Spleen (tissue), 13 donors: ENCODE measurements at regions of chr19 and their contacts with region 1.

Region 1: GRCh38 chr19:3471954-3472655 is 8.2 kb downstream of the SMIM24 start:
- DNase-seq: no peak
- H3K4me3 ChIP-seq: no peak overlapping the region
- H3K27ac ChIP-seq: no peak overlapping the region
- H3K4me1 ChIP-seq: peaks cover 0 to 42% (median 11%) of the 10 kb centered on the region in 6 donors
- H3K27me3 ChIP-seq: peaks cover 0 to 26% (median 0%) of the 10 kb centered on the region in 7 donors
- CTCF ChIP-seq: peak in 10 of 11 experiments; percentile 42 to 79 (median 68)
- POLR2A ChIP-seq: no peak

Region 2: DNA sequence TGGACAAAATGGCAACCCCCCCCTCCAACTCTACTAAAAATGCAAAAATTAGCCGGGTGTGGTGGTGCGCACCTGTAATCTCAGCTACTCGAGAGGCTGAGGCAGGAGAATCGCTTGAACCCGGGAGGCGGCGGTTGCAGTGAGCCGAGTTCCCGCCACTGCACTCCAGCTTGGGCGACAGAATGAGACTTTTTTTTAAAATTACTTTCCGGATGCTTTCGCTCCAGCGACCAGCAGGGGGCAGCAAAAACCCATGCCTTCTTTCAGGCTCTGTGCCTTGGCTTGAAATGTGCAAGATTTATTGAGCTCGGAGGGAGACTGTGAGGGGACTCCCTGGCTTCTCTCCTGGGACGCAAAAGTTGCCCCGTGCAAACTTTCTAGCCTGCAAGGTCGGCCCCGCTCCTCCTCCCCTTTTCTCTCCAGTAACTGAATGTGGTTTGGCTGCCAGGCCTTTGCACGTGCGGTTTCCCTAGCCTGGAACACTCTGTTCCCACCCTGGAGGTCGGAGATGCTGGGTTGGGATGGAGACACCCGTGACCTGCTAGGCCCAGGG is 167.2 kb before region 1 on chr19:
- intact Hi-C with region 1: loop called (anchors 5 kb)
- DNase-seq: peak; percentile 86
- H3K4me3 ChIP-seq: peak overlapping the region in 1 of 8 donors; percentile 11
- H3K27ac ChIP-seq: no peak overlapping the region
- H3K4me1 ChIP-seq: peaks cover 0 to 9% (median 3%) of the 10 kb centered on the region in 6 donors
- H3K27me3 ChIP-seq: peaks cover 0 to 87% (median 20%) of the 10 kb centered on the region in 7 donors
- CTCF ChIP-seq: peak; percentile 48 to 85 (median 73)
- POLR2A ChIP-seq: no peak

Region 3: DNA sequence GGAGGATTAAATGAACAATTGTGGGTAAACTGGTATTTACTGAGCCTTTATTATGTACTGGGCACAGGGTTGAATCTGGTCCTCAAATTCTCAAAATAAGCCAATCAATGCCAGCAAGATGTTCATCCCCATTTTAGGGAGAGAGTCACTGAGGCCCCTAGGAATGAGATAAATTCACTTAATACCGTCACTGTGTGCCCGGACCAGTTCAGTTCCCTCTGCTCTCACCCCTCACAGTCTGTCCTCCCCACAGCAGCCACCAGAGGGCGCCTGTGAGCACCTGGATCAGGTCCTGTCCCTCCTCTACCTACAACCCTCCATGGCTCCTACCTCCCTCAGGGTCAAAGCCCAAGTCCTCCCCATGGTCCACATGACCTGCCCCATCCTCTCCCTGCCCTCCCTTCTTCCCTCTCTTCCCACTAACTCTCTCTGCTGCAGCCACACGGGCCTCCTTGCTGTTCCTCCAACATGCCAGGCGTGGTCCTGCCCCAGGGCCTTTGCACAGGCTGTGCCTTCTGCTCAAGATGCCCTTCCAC is 147.7 kb before region 1 on chr19:
- intact Hi-C with region 1: loop called (anchors 5 kb)
- DNase-seq: peak; percentile 91
- H3K4me3 ChIP-seq: no peak overlapping the region
- H3K27ac ChIP-seq: no peak overlapping the region
- H3K4me1 ChIP-seq: peaks cover 0 to 6% (median 0%) of the 10 kb centered on the region in 6 donors
- H3K27me3 ChIP-seq: peaks cover 0 to 26% (median 14%) of the 10 kb centered on the region in 7 donors
- CTCF ChIP-seq: peak; percentile 35 to 88 (median 74)
- POLR2A ChIP-seq: no peak

Region 4: DNA sequence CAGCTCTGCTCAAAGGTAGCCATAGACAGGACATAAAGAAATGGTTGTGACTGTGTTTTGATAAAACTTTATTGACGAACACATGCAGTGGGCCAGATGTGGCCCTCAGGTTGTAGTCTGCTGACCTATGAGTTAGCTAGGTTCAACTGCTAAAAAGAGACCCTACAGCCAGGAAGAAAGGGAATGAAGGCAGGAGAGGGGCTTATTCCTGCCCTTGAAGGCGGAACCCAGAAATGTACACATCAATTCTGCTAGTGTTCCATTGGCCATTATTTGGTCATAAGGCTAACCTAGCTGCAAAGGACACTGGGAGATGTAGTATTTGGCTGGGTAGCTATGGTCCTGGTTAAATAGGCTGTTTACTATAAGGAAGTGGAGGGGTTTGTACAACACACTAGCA is 271.4 kb after region 1 on chr19:
- intact Hi-C with region 1: no loop called
- DNase-seq: no peak
- H3K4me3 ChIP-seq: no peak overlapping the region
- H3K27ac ChIP-seq: no peak overlapping the region
- H3K4me1 ChIP-seq: no peaks in the 10 kb centered on the region
- H3K27me3 ChIP-seq: peaks cover 0 to 8% (median 0%) of the 10 kb centered on the region in 7 donors
- CTCF ChIP-seq: no peak
- POLR2A ChIP-seq: no peak

Region 5: GRCh38 chr19:4019578-4019977 is 547.5 kb after region 1 on chr19:
- intact Hi-C with region 1: no loop called
- DNase-seq: no peak
- H3K4me3 ChIP-seq: no peak overlapping the region
- H3K27ac ChIP-seq: no peak overlapping the region
- H3K4me1 ChIP-seq: peaks cover 0 to 80% (median 39%) of the 10 kb centered on the region in 6 donors
- H3K27me3 ChIP-seq: no peaks in the 10 kb centered on the region
- CTCF ChIP-seq: no peak
- POLR2A ChIP-seq: no peak